ENCODE measurements at regions of chr7 and their contacts with region 1.

Region 1: GRCh38 chr7:44920119-44920518 is 34.8 kb upstream of the PURB start:
- DNase-seq: no peak
- H3K4me3 Mint-ChIP-seq: no peak overlapping the region
- H3K27ac Mint-ChIP-seq: peak overlapping the region; percentile 5
- H3K4me1 Mint-ChIP-seq: peaks cover 23% of the 10 kb centered on the region
- H3K27me3 Mint-ChIP-seq: no peaks in the 10 kb centered on the region

Region 2: DNA sequence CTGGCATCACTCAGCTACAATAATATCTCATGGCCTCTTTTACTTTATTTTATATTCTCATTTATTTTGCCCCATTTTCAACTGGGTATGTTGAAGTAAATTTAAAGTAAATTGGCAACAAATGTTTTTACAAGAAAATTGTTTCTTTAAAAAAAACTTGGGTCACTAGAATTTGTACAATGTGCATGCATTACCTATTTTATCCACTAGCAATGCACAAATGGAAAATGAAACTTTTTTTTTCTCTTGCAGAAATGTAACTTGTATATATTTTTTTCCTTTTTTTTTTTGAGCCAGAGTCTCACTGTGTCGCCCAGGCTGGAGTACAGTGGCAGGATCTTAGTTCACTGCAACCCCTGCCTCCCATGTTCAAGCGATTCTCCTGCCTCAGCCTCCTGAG is 62.0 kb before region 1 on chr7:
- CTCF ChIA-PET with region 1: interaction called, 11 read pairs
- POLR2A ChIA-PET with region 1: interaction called, 4 read pairs
- DNase-seq: no peak
- H3K4me3 Mint-ChIP-seq: no peak overlapping the region
- H3K27ac Mint-ChIP-seq: peak overlapping the region; percentile 60
- H3K4me1 Mint-ChIP-seq: peaks cover 15% of the 10 kb centered on the region
- H3K27me3 Mint-ChIP-seq: peaks cover 3% of the 10 kb centered on the region